HEK293 (cell line): ENCODE measurements at regions of chr16 and their contacts with region 1.

Region 1: DNA sequence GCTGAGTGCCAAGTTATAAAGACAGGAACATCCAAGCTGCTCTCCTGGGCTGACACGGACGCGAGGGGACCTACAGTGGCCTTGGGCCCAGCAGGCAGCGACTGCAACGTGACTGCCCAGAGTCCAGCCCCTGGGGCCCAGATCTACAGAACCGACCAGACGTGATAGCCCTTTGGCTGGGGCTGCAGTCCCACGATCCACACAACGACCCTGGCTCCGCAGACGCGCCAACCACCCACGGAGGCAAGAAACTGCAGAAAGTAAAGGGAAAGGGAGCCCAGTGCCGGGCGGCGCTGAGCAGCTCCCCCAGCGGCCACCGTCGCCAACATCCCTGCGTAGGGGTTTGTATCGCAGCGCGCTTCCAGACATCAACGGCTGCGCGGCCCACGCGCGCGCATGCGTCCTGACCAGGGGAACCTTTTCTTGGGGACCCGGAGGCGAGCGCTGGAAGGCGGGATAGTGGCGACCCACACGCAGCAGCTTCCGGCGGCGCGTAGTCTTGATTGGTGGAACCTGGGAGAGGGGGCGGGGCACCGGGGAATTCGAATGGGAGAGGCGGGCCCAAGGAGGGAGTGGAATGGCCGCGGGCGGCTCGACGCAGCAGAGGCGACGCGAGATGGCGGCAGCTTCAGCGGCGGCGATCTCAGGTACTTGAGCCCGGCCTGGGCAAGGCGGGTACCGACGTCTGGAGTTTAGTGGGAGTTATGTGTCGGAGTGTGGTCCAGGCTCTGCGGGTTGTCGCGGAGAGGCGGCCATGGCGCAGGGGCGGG is at the start of gene KIF22:
- H3K4me3 ChIP-seq: peak within 1 kb of the TSS; percentile 93
- H3K27ac ChIP-seq: peak within 1 kb of the TSS; percentile 90
- H3K4me1 ChIP-seq: 0 out of 2 replicates have a peak, but pooled peaks cover 2% of the 10 kb centered on the region
- CTCF ChIP-seq: peak; percentile 96

Region 2: GRCh38 chr16:29686740-29687332 is 103.5 kb before region 1 on chr16:
- CTCF ChIA-PET with region 1: no interaction called
- POLR2A ChIA-PET with region 1: no interaction called
- H3K4me3 ChIP-seq: no peak overlapping the region
- H3K27ac ChIP-seq: no peak overlapping the region
- H3K4me1 ChIP-seq: no peaks in the 10 kb centered on the region
- CTCF ChIP-seq: no peak

Region 3: GRCh38 chr16:29775742-29776408 is 14.5 kb before region 1 on chr16:
- CTCF ChIA-PET with region 1: interaction called, 11 read pairs
- POLR2A ChIA-PET with region 1: interaction called, 4 read pairs
- H3K4me3 ChIP-seq: no peak overlapping the region
- H3K27ac ChIP-seq: no peak overlapping the region
- H3K4me1 ChIP-seq: no peaks in the 10 kb centered on the region
- CTCF ChIP-seq: no peak

Region 4: GRCh38 chr16:29805378-29806098 is 15.2 kb after region 1 on chr16:
- CTCF ChIA-PET with region 1: interaction called, 28 read pairs
- POLR2A ChIA-PET with region 1: interaction called, 31 read pairs
- H3K4me3 ChIP-seq: peak overlapping the region; percentile 53
- H3K27ac ChIP-seq: peak overlapping the region; percentile 100
- H3K4me1 ChIP-seq: peaks cover 13% of the 10 kb centered on the region
- CTCF ChIP-seq: peak; percentile 60

Region 5: DNA sequence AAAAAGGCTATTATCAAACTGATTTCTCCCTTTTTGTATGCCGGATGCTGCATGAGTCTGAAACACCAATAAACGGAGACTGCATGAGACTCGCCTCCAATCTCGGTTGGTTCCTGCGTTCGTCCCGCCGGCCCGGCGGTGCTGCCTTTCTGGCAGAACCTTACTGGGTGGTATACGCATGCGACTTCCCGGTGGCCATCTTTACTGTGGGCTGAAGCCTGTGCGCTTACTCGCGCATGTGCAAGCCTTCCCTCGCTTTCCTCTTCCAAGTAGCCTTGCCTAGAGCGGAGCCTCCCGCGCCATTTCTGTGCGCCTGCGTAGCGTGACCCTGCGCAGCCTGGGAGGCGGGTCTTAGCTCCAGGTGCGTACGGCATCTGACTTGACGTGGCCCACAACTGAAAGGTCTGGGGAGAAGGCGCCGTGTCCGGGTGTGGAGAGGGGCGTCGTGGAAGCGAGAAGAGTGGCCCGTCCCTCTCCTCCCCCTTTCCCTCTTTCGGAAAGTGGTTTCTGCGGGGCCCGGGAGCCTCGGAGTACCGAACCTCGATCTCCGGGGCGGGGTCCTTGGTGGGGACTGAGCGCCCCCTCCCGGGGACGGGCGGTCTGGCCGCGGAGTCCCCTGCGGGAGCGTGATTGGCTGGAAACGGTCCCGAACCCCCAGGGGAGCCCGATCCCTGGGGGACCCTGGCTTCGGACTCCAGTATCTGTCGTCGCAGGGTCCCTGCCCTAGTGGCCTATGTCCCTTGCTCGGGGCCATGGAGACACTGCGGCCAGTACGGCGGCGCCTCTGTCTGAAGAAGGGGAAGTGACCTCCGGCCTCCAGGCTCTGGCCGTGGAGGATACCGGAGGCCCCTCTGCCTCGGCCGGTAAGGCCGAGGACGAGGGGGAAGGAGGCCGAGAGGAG is 25.7 kb after region 1 on chr16 and contains the start of gene PAGR1:
- CTCF ChIA-PET with region 1: interaction called, 3 read pairs
- POLR2A ChIA-PET with region 1: interaction called, 14 read pairs
- H3K4me3 ChIP-seq: peak within 1 kb of the TSS; percentile 78
- H3K27ac ChIP-seq: peak within 1 kb of the TSS; percentile 96
- H3K4me1 ChIP-seq: peaks cover 19% of the 10 kb centered on the region
- CTCF ChIP-seq: no peak